Endothelial cell of umbilical vein (primary cell): ENCODE measurements at regions of chr19 and their contacts with region 1.

Region 1: GRCh38 chr19:9342610-9343304 is 18.8 kb downstream of the ZNF559 start:
- DNase-seq: no peak
- H3K4me3 ChIP-seq: no peak overlapping the region
- H3K27ac ChIP-seq: no peak overlapping the region
- H3K4me1 ChIP-seq: no peaks in the 10 kb centered on the region
- H3K27me3 ChIP-seq: no peaks in the 10 kb centered on the region
- CTCF ChIP-seq: no peak
- POLR2A ChIP-seq: no peak

Region 2: DNA sequence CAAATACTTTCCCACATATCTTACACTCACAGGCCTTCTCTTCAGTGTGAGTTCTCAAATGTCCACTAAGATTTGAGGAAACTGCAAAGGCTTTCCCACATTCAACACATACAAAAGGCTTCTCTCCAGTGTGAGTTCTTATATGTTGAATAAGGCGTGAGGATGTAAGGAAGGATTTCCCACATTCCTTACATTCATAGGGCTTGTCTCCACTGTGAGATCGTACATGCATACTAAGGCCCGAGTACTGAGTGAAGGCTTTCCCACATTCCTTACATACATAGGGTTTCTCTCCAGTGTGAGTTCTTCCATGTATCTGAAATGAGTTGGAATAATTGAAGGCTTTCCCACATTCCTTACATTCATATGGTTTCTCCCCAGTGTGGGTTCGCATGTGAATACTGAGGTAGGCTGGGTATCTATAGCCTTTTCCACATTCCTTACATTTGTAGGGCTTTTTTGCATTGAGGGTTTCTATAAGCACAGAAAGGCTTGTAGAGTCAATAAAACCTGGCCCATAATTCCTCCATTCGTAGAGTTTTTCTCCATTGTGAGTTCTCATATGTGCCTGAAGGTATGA is 186.1 kb after region 1 on chr19:
- CTCF ChIA-PET with region 1: no interaction called
- POLR2A ChIA-PET with region 1: no interaction called
- dilution Hi-C with region 1: no loop called
- intact Hi-C with region 1: loop called (anchors 10 kb)
- DNase-seq: peak; percentile 4
- H3K4me3 ChIP-seq: no peak overlapping the region
- H3K27ac ChIP-seq: no peak overlapping the region
- H3K4me1 ChIP-seq: no peaks in the 10 kb centered on the region
- H3K27me3 ChIP-seq: no peaks in the 10 kb centered on the region
- CTCF ChIP-seq: no peak
- POLR2A ChIP-seq: no peak